Activated T-helper 2 cell treated with anti-CD3 and anti-CD28 coated beads, Interferon-gamma antibody, Interleukin-2, Interleukin-4, amounts not matched to agents 10 μg/mL and 5 μg/mL and 100 μg/mL, durations not matched to agents 14 hours and 24 hours and 36 hours (primary cell): ENCODE measurements at regions of chr22 and their contacts with region 1.

Region 1: GRCh38 chr22:31970490-31971444 is 26.4 kb downstream of the YWHAH start:
- DNase-seq: peak; percentile 85
- H3K4me3 Mint-ChIP-seq: peak overlapping the region; percentile 67
- H3K27ac Mint-ChIP-seq: no peak overlapping the region
- H3K4me1 Mint-ChIP-seq: peaks cover 12% of the 10 kb centered on the region
- H3K27me3 Mint-ChIP-seq: peaks cover 2% of the 10 kb centered on the region

Region 2: GRCh38 chr22:31943976-31944699 is 26.6 kb before region 1 on chr22 and contains the start of gene YWHAH:
- intact Hi-C with region 1: loop called (anchors 1 kb)
- DNase-seq: peak; percentile 89
- H3K4me3 Mint-ChIP-seq: peak within 1 kb of the TSS; percentile 88
- H3K27ac Mint-ChIP-seq: peak within 1 kb of the TSS; percentile 91
- H3K4me1 Mint-ChIP-seq: peaks cover 19% of the 10 kb centered on the region
- H3K27me3 Mint-ChIP-seq: no peaks in the 10 kb centered on the region
- total RNA-seq, gene YWHAH: 150 TPM in 2 replicates